A673 (cell line): ENCODE measurements at regions of chr15 and their contacts with region 1.

Region 1: GRCh38 chr15:55742927-55743728 is at the start of gene PRTG:
- DNase-seq: no peak
- H3K4me3 ChIP-seq: peak within 1 kb of the TSS; percentile 42
- H3K27ac ChIP-seq: no peak within 1 kb of the TSS
- H3K4me1 ChIP-seq: peaks cover 32% of the 10 kb centered on the region
- H3K27me3 ChIP-seq: peaks cover 82% of the 10 kb centered on the region
- CTCF ChIP-seq: no peak
- total RNA-seq, gene PRTG: 0.02 TPM in 1 of 2 replicates, not detected in the other

Region 2: GRCh38 chr15:55074431-55074830 is 668.7 kb before region 1 on chr15:
- CTCF ChIA-PET with region 1: no interaction called
- POLR2A ChIA-PET with region 1: no interaction called
- intact Hi-C with region 1: no loop called
- DNase-seq: no peak
- H3K4me3 ChIP-seq: no peak overlapping the region
- H3K27ac ChIP-seq: no peak overlapping the region
- H3K4me1 ChIP-seq: no peaks in the 10 kb centered on the region
- H3K27me3 ChIP-seq: no peaks in the 10 kb centered on the region
- CTCF ChIP-seq: no peak

Region 3: GRCh38 chr15:55654561-55655031 is 88.5 kb before region 1 on chr15:
- CTCF ChIA-PET with region 1: no interaction called
- POLR2A ChIA-PET with region 1: interaction called, 5 read pairs
- intact Hi-C with region 1: loop called (anchors 5 kb)
- DNase-seq: no peak
- H3K4me3 ChIP-seq: no peak overlapping the region
- H3K27ac ChIP-seq: no peak overlapping the region
- H3K4me1 ChIP-seq: no peaks in the 10 kb centered on the region
- H3K27me3 ChIP-seq: no peaks in the 10 kb centered on the region
- CTCF ChIP-seq: no peak

Region 4: GRCh38 chr15:55775316-55775715 is 32.2 kb after region 1 on chr15:
- CTCF ChIA-PET with region 1: no interaction called
- POLR2A ChIA-PET with region 1: no interaction called
- intact Hi-C with region 1: loop called (anchors 2 kb)
- DNase-seq: peak; percentile 82
- H3K4me3 ChIP-seq: no peak overlapping the region
- H3K27ac ChIP-seq: no peak overlapping the region
- H3K4me1 ChIP-seq: peaks cover 12% of the 10 kb centered on the region
- H3K27me3 ChIP-seq: no peaks in the 10 kb centered on the region
- CTCF ChIP-seq: no peak